Calu3 (cell line): ENCODE measurements at regions of chr19 and their contacts with region 1.

Region 1: DNA sequence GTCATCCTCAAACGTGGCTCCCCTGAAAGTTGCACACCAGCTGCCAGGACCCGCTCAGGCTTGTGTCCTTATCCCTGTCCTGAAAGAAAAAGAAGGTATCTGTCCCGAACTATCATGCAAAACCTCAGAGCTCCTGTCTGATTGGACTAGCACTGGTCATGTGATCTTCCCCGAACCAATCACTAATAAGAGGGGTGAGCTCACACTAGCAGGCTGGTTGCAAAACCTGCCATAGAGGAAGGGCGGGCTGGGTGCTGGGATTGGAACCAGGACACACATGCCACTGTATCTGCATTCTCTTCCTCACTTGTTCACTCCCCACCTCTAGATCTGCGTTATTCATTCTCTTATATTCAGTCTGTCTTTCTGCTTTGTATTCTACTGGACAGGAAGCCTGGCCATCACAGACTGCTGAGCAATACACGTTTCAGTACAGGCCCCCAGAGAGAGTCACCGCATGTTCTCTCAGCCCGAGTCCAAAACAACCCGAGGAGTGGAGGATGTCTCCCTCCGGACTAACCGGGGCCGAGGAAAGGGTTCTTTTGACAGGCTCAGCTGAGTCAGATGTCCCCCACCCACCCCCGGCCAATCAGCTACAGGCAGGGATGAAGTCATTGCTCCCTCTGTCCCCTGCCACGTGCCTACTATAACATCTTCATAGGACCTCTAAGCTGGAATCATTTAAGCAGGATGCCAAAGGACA is 97.7 kb downstream of the SIPA1L3 start:
- DNase-seq: peak; percentile 45
- H3K4me3 Mint-ChIP-seq: no peak overlapping the region
- H3K27ac Mint-ChIP-seq: no peak overlapping the region
- H3K4me1 Mint-ChIP-seq: no peaks in the 10 kb centered on the region
- H3K27me3 Mint-ChIP-seq: no peaks in the 10 kb centered on the region
- CTCF ChIP-seq: no peak

Region 2: GRCh38 chr19:37931881-37932655 is 72.6 kb before region 1 on chr19:
- CTCF ChIA-PET with region 1: interaction called, 7 read pairs
- intact Hi-C with region 1: loop called (anchors 5 kb)
- DNase-seq: peak; percentile 98
- H3K4me3 Mint-ChIP-seq: peak overlapping the region; percentile 93
- H3K27ac Mint-ChIP-seq: peak overlapping the region; percentile 91
- H3K4me1 Mint-ChIP-seq: peaks cover 71% of the 10 kb centered on the region
- H3K27me3 Mint-ChIP-seq: no peaks in the 10 kb centered on the region
- CTCF ChIP-seq: no peak

Region 3: DNA sequence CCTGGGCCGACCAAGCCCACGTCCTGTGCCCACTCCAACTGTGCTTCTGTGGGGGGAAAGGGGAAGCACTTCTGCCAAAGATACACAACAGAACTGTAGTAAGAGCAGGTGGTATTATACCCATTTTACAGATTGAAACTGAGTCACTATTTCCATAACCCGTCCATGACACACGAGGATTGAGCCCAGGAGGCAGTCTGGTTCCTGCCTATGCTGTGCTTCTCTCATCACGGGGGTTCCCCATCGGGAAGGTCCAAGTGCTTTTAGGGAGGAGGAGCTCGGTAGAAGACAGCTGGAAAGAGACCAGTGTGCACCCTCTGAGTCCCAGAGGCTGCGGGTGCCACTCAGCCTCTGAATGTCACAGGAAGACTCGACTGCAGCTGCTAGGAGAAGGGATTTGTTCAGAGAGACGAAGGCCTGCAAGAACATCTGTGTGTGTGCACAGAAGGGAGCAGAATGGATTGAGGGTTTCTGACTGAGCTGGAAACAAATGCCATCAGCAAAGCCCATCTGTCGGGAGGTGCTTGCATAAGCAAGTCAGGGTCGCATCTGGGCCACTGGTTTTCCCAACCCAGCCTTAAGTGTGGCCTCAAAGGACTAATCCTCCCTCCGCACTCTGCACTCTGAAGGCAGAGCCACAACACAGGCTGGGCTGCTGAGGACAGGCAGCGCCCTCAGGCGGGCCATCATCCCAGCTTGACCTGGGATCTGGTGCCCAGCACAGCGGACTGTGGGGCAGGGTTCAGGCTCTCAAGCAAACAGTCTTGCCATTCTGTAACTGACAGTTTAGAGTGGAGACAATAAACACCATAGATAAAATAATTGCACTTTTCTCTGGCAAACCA is 69.4 kb after region 1 on chr19:
- CTCF ChIA-PET with region 1: no interaction called
- intact Hi-C with region 1: no loop called
- DNase-seq: no peak
- H3K4me3 Mint-ChIP-seq: no peak overlapping the region
- H3K27ac Mint-ChIP-seq: no peak overlapping the region
- H3K4me1 Mint-ChIP-seq: peaks cover 21% of the 10 kb centered on the region
- H3K27me3 Mint-ChIP-seq: no peaks in the 10 kb centered on the region
- CTCF ChIP-seq: no peak